BJ (cell line): ENCODE measurements at regions of chrX and their contacts with region 1.

Region 1: DNA sequence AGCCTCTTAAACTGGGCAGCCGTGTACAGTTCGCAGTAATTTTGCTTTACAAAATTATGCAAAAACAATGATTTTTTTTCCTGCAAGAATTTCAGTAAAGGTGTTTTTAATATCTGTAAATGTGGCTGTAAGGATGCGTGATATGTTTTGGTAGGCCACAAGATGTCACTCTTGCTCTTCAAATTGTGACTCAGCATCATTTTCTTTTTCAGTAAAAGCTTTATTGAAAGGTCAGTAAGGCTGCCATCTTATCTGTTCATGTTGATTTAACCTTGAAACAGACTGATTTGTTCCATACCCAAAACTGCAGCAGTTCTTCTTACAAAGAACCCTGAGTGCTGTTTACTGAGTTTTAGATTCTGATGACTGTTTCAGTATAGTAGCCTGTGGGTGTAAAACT is 39.9 kb downstream of the TXLNG start:
- DNase-seq: no peak
- H3K4me3 ChIP-seq: no peak overlapping the region
- H3K27me3 ChIP-seq: no peaks in the 10 kb centered on the region
- CTCF ChIP-seq: 0 out of 2 replicates have a peak, but pooled peaks have one; percentile 16

Region 2: GRCh38 chrX:16797358-16797757 is 28.8 kb before region 1 on chrX:
- CTCF ChIA-PET with region 1: no interaction called
- POLR2A ChIA-PET with region 1: no interaction called
- DNase-seq: no peak
- H3K4me3 ChIP-seq: no peak overlapping the region
- H3K27me3 ChIP-seq: no peaks in the 10 kb centered on the region
- CTCF ChIP-seq: no peak

Region 3: GRCh38 chrX:16882702-16883486 is 56.7 kb after region 1 on chrX:
- CTCF ChIA-PET with region 1: interaction called, 18 read pairs
- POLR2A ChIA-PET with region 1: no interaction called
- DNase-seq: no peak
- H3K4me3 ChIP-seq: peak overlapping the region; percentile 47
- H3K27me3 ChIP-seq: no peaks in the 10 kb centered on the region
- CTCF ChIP-seq: peak; percentile 66

Region 4: DNA sequence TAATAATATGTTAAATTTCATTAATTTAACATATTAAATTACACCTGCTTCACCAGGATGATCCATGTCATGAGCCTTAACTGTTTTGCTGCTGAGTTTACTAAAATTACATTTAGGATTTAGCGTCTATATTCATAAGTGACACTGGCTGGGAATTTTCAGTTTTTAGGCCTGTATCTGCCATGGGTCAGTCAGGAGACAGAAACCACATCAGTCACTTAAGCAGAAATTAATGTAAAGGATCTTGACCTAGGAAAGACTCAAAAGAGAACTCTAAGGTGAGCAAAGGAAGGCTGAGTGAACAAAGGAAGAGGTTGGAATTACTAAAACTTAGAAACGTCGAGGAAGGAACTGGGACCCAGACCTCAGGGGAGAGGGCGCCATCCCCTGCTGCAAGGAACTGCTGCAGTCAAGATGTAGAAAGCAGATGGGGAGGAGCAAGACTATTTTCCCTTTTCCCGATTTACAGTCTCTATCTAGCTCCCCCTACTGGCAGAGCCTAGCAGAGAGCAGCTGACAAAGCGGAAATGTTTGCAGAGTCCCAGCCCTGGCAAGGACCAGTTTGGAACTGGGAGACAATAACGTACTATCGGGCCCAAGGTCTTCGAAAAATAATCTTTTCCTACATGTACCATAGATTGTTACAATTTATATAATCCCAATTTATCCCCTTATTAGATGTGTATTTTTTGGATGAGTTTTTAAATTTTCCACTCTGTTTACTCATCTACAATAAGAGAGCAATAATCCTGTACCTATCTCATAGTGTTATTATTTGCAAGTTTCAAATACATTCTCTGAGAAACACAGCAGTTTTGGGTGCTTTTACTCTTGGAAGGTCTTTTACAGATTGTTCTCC is 66.5 kb after region 1 on chrX:
- CTCF ChIA-PET with region 1: interaction called, 18 read pairs
- POLR2A ChIA-PET with region 1: no interaction called
- DNase-seq: no peak
- H3K4me3 ChIP-seq: no peak overlapping the region
- H3K27me3 ChIP-seq: peaks cover 2% of the 10 kb centered on the region; the same call in 1 of the 2 replicates
- CTCF ChIP-seq: peak; percentile 81

Region 5: GRCh38 chrX:17046478-17047097 is 220.4 kb after region 1 on chrX:
- CTCF ChIA-PET with region 1: interaction called, 23 read pairs
- POLR2A ChIA-PET with region 1: no interaction called
- DNase-seq: no peak
- H3K4me3 ChIP-seq: no peak overlapping the region
- H3K27me3 ChIP-seq: peaks cover 3% of the 10 kb centered on the region
- CTCF ChIP-seq: peak; percentile 71